ENCODE measurements at regions of chr1 and their contacts with region 1.

Region 1: GRCh38 chr1:14733048-14733778 is 134.7 kb downstream of the KAZN start:
- DNase-seq: no peak
- H3K4me3 ChIP-seq: no peak overlapping the region
- H3K27ac ChIP-seq: no peak overlapping the region
- H3K27me3 ChIP-seq: peaks cover 0 to 5% (median 0%) of the 10 kb centered on the region in 45 donors
- CTCF ChIP-seq: no peak

Region 2: DNA sequence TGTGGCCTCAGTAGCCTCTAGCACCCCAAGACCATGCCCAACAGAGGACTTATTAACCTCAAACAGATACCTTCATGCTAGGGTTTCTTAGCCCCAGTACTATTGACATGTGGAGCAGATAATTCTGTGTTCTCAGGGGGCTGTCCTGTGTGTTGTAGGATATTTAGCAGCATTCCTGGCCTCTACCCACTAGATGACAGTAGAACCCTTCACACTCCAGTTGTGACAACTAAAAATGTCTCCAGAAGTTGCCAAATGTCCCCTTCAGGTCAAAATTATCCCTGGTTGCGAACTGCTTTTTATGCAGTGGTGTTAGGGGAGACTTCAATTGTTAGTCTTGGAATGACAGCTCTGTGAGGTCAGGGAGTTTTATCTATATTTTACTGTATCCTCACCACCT is 126.6 kb before region 1 on chr1:
- intact Hi-C with region 1: loop called (anchors 5 to 10 kb)
- DNase-seq: no peak
- H3K4me3 ChIP-seq: no peak overlapping the region
- H3K27ac ChIP-seq: no peak overlapping the region
- H3K27me3 ChIP-seq: peaks cover 0 to under 1% (median 0%) of the 10 kb centered on the region in 45 donors
- CTCF ChIP-seq: peak in 49 of 56 donors; percentile 11 to 68 (median 42)

Region 3: GRCh38 chr1:14787604-14788003 is 54.4 kb after region 1 on chr1:
- intact Hi-C with region 1: no loop called
- DNase-seq: no peak
- H3K4me3 ChIP-seq: no peak overlapping the region
- H3K27ac ChIP-seq: peak overlapping the region in 1 of 59 donors; percentile 57
- H3K27me3 ChIP-seq: no peaks in the 10 kb centered on the region
- CTCF ChIP-seq: no peak

Measured in dorsolateral prefrontal cortex (tissue), 120 donors.